ENCODE measurements at regions of chr2 and their contacts with region 1.

Region 1: GRCh38 chr2:231297108-231297908 is 98.2 kb upstream of the B3GNT7 start:
- DNase-seq: peak; percentile 81

Region 2: DNA sequence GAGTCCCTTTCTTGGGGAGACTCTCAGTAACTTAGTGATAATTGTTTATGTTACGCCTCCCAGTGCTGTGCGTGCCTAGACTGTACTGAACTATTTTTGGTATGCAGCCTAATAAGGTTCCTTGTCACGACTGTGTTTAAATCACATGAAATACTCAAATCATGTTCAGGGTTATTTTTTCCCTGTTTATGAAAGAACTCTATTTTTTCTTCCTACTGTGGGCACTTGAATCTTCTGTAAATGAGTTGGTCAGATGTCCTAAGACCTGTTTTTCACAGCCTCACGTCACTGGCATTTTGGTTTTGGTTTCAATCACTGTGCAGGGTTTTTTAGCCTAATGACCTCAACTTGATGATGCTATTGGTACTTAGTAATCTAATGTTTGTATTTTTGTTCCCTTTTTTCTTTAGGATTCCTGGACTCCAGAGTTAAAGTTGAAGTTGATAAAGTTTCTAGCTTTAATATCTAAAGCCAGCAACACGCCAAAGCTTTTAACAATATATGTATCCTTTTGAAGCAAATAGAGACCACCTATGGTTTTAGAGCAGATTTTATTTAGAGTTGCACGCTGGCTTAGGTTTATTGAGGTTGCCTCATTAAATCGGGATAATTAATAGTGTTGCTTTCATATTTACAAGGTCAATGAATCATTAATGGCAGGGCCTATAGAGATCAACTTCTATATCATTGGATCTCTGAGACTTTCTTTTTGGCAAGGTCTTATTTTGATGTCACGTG is 74.8 kb before region 1 on chr2:
- intact Hi-C with region 1: no loop called
- DNase-seq: no peak

Region 3: DNA sequence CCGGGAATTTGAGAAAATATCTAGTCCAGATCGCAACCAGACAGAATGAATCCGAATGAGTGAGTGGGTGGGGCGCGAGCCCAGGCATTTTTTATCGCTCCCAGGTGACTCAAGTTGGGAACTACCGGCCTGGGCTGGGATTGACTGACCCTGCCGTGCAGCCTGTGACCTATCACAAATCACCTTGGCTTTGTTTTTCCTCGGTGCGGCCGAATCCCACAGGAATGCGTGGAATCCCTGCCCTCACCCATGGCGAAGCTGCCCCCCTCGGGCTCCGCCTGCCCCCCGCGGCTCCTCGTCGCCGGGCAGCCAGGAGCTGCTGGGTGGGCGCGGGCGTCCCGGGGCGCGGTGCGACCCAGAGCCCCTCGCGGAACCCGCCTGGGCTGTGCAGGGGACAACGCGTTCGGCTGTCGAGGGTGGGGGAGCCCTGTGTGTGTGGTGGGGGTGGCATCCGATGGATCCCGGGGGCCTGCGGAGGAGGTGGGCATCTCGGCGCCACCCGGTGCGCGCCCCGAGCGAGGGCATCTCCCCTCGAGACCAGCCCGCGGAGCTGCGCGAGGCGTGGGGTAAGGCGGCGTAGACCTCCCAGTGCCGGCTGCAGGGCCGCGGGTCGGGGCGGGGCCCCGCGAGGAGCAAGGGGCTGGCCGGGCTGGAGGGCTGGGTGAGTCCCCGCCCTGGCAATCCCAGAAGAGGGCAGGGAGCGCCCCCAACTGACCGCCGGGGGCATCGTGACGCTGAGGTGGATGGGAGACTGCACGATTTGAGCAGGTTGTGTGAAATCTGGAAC is 114.7 kb after region 1 on chr2:
- intact Hi-C with region 1: loop called in 1 of 2 experiments (anchors 10 kb)
- DNase-seq: peak; percentile 96